IMR-90 (cell line): ENCODE measurements at regions of chr7 and their contacts with region 1.

Region 1: GRCh38 chr7:139359366-139360209 is at the start of gene LUC7L2:
- DNase-seq: peak; percentile 98
- ATAC-seq: peak; percentile 86
- H3K4me3 ChIP-seq: peak within 1 kb of the TSS; percentile 56
- H3K27ac ChIP-seq: peak within 1 kb of the TSS; percentile 96
- H3K4me1 ChIP-seq: no peaks in the 10 kb centered on the region
- H3K27me3 ChIP-seq: no peaks in the 10 kb centered on the region
- CTCF ChIP-seq: peak; percentile 22; the same call in 1 of the 2 replicates
- POLR2A ChIP-seq: peak; percentile 94
- RAD21 ChIP-seq: no peak
- total RNA-seq, gene LUC7L2: 14.9 and 30.6 TPM in 2 replicates

Region 2: DNA sequence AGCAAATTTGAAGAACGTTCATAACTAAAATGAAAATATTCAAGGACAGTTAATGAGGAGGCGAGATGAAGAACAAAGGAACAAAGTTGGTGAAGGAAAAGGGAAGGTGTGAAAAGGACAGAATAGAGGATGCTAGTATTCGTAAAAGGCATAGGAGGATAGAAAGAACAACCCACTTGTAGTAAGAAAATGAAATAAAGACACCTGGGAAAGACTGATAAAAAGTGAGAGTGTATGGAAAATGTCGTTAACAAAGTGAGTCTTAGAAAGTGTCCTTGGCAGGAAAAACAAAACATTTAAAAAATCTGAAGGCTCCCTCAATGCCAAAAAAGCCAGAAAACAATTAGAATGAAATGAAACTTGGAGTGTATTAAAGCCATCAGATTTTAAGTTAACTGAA is 220.4 kb before region 1 on chr7:
- CTCF ChIA-PET with region 1: no interaction called
- POLR2A ChIA-PET with region 1: no interaction called
- dilution Hi-C with region 1: no loop called
- in situ Hi-C with region 1: no loop called
- intact Hi-C with region 1: no loop called
- DNase-seq: no peak
- ATAC-seq: no peak
- H3K4me3 ChIP-seq: no peak overlapping the region
- H3K27ac ChIP-seq: no peak overlapping the region
- H3K4me1 ChIP-seq: no peaks in the 10 kb centered on the region
- H3K27me3 ChIP-seq: no peaks in the 10 kb centered on the region
- CTCF ChIP-seq: no peak
- POLR2A ChIP-seq: no peak
- RAD21 ChIP-seq: no peak

Region 3: DNA sequence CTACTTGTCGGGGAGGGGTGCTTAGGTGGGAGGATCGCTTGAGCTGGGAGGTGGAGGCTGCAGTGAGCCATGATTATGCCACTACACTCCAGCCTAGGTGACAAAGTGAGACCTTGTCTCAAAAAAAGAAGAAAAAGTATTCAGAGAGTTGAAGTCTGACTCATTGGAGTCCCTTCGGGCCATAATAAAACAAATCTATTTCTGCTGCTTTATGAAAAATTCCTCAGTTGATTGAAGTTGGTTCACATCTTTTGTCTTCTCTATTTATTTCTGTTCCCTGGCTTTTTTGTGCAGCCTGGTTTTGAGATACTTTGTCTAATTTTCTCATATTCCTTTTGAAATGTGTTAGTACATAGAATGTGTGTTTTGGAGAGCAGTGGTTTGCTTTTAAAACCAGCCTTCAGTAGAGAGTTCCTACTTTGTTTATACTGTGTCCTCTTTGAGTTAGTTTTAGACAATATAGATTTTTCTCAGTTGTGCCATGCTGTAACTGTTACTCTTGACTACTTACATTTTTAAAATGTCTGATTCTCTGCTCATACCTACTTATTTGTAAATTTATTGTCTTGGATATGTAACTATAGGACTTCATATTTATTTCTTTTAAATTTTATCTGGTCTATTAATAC is 36.8 kb after region 1 on chr7:
- CTCF ChIA-PET with region 1: no interaction called
- POLR2A ChIA-PET with region 1: no interaction called
- dilution Hi-C with region 1: no loop called
- in situ Hi-C with region 1: no loop called
- intact Hi-C with region 1: loop called (anchors 5 kb)
- DNase-seq: peak; percentile 13
- ATAC-seq: peak; percentile 72
- H3K4me3 ChIP-seq: no peak overlapping the region
- H3K27ac ChIP-seq: no peak overlapping the region
- H3K4me1 ChIP-seq: peaks cover 6% of the 10 kb centered on the region; the same call in 1 of the 2 replicates
- H3K27me3 ChIP-seq: no peaks in the 10 kb centered on the region
- CTCF ChIP-seq: no peak
- POLR2A ChIP-seq: no peak
- RAD21 ChIP-seq: no peak

Region 4: GRCh38 chr7:139416405-139416804 is 56.8 kb after region 1 on chr7:
- CTCF ChIA-PET with region 1: no interaction called
- POLR2A ChIA-PET with region 1: no interaction called
- dilution Hi-C with region 1: no loop called
- in situ Hi-C with region 1: no loop called
- intact Hi-C with region 1: loop called (anchors 5 kb)
- DNase-seq: no peak
- ATAC-seq: peak; percentile 57
- H3K4me3 ChIP-seq: no peak overlapping the region
- H3K27ac ChIP-seq: no peak overlapping the region
- H3K4me1 ChIP-seq: peaks cover 2% of the 10 kb centered on the region; the same call in 1 of the 2 replicates
- H3K27me3 ChIP-seq: no peaks in the 10 kb centered on the region
- CTCF ChIP-seq: no peak
- POLR2A ChIP-seq: no peak
- RAD21 ChIP-seq: no peak